CD4-positive, alpha-beta memory T cell (primary cell): ENCODE measurements at regions of chr7 and their contacts with region 1.

Region 1: DNA sequence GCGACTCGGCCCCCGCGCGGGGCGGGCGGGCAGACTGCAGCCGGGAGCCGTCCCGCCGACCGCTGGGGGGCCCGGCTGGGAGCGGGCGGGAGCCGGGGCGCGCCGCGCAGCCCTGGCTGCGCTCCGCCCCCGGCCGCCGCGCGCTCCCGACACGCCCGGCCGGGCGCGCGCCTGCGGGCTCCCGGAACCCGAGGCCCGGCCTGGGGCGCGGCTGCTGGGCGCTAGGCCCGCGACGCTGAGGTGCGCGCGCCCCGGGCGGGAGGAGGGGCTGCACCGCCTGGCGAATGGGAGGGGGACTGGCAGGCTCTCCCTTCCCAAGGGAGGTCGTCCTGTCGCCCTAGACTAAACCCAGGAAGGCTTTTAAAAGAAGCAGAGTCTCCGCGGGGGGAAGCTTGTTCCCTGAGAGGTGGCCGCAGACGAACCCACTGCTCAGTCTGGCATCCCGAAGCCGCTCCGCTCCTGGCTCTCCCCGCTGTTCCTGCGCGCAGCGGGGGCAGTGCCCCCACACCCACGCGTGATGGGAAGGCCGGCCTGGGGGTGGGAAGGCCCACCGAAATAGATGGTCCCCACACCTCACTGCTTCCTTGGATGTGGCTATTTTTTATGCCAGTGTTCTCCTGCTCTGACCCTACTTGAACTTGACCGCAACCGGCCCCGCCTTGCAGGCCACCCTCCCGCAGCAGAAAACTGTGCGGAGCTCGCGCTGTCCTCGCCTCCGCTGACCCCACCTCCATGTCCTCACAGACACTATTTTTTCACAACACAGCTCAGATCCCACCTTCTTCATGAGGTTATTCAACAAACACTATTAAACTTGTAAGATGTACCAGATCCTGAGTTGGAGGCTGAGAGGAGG is at the start of gene VOPP1:
- DNase-seq: peak in 4 of 5 donors; percentile 62 to 78 (median 69)
- H3K4me3 ChIP-seq: peak within 1 kb of the TSS; percentile 63 to 80
- H3K4me3 Mint-ChIP-seq: peak within 1 kb of the TSS; percentile 93 to 98 (median 96)
- H3K27ac ChIP-seq: peak within 1 kb of the TSS; percentile 82
- H3K27ac Mint-ChIP-seq: peak within 1 kb of the TSS; percentile 93 to 99 (median 97)
- H3K4me1 ChIP-seq: peaks cover 55% of the 10 kb centered on the region
- H3K4me1 Mint-ChIP-seq: peaks cover 44 to 72% (median 56%) of the 10 kb centered on the region in 4 donors
- H3K27me3 ChIP-seq: no peaks in the 10 kb centered on the region
- H3K27me3 Mint-ChIP-seq: no peaks in the 10 kb centered on the region
- total RNA-seq, gene VOPP1: 91.0 to 98.7 TPM

Region 2: GRCh38 chr7:54758702-54759592 is 813.7 kb before region 1 on chr7 and contains the start of gene SEC61G:
- CTCF ChIA-PET with region 1: no interaction called
- POLR2A ChIA-PET with region 1: interaction called, 10 read pairs
- intact Hi-C with region 1: loop called (anchors 10 kb)
- DNase-seq: peak; percentile 95 to 96 (median 95)
- H3K4me3 ChIP-seq: peak within 1 kb of the TSS; percentile 62 to 97
- H3K4me3 Mint-ChIP-seq: peak within 1 kb of the TSS; percentile 99 to 100 (median 100)
- H3K27ac ChIP-seq: peak within 1 kb of the TSS; percentile 81
- H3K27ac Mint-ChIP-seq: peak within 1 kb of the TSS; percentile 95 to 99 (median 98)
- H3K4me1 ChIP-seq: peaks cover 22% of the 10 kb centered on the region
- H3K4me1 Mint-ChIP-seq: peaks cover 15 to 51% (median 32%) of the 10 kb centered on the region in 4 donors
- H3K27me3 ChIP-seq: no peaks in the 10 kb centered on the region
- H3K27me3 Mint-ChIP-seq: no peaks in the 10 kb centered on the region
- total RNA-seq, gene SEC61G: 67.0 to 73.9 TPM

Region 3: DNA sequence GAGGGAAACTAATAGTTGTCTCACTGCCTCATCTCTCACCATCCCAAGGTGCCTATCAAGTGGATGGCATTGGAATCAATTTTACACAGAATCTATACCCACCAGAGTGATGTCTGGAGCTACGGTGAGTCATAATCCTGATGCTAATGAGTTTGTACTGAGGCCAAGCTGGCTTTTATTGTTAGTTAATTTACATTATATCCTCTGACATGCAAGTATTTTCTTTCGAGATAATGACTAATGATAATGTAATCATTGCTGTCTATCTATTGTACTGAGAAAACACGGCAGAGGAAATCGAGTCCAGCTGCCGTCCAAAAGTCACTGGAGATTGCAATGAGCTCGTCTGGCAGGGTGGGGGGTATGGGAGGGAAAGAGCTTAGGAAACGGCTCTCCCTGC is 379.9 kb before region 1 on chr7:
- CTCF ChIA-PET with region 1: no interaction called
- POLR2A ChIA-PET with region 1: no interaction called
- intact Hi-C with region 1: no loop called
- DNase-seq: no peak
- H3K4me3 ChIP-seq: no peak overlapping the region
- H3K4me3 Mint-ChIP-seq: no peak overlapping the region
- H3K27ac ChIP-seq: no peak overlapping the region
- H3K27ac Mint-ChIP-seq: no peak overlapping the region
- H3K4me1 ChIP-seq: no peaks in the 10 kb centered on the region
- H3K4me1 Mint-ChIP-seq: peaks cover 0 to 2% (median 0%) of the 10 kb centered on the region in 4 donors
- H3K27me3 ChIP-seq: no peaks in the 10 kb centered on the region
- H3K27me3 Mint-ChIP-seq: peaks cover 5 to 20% of the 10 kb centered on the region in 2 donors

Region 4: DNA sequence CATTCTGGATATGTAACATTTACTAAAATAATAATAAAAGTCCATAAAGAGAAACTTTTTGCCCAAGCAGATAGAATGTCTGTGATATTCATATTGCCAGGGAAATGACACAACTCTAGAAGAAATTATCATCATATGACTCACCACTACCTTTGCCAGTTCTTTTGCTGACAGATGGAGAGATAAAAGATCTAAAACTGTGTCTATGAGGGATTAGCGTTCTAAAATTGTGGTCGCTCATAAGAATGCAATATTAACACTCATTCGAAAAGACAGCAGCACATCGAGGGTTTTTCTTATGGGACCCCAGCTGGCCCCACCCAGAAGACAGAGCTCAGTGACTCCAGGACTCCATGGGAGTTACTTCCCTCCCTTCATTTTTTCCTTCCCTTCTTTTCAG is 224.1 kb before region 1 on chr7:
- CTCF ChIA-PET with region 1: no interaction called
- POLR2A ChIA-PET with region 1: no interaction called
- intact Hi-C with region 1: no loop called
- DNase-seq: no peak
- H3K4me3 ChIP-seq: no peak overlapping the region
- H3K4me3 Mint-ChIP-seq: no peak overlapping the region
- H3K27ac ChIP-seq: no peak overlapping the region
- H3K27ac Mint-ChIP-seq: peak overlapping the region in 1 of 7 donors; percentile 53
- H3K4me1 ChIP-seq: no peaks in the 10 kb centered on the region
- H3K4me1 Mint-ChIP-seq: peaks cover 0 to 4% (median 4%) of the 10 kb centered on the region in 4 donors
- H3K27me3 ChIP-seq: no peaks in the 10 kb centered on the region
- H3K27me3 Mint-ChIP-seq: peaks cover 3% of the 10 kb centered on the region in 2 donors

Region 5: DNA sequence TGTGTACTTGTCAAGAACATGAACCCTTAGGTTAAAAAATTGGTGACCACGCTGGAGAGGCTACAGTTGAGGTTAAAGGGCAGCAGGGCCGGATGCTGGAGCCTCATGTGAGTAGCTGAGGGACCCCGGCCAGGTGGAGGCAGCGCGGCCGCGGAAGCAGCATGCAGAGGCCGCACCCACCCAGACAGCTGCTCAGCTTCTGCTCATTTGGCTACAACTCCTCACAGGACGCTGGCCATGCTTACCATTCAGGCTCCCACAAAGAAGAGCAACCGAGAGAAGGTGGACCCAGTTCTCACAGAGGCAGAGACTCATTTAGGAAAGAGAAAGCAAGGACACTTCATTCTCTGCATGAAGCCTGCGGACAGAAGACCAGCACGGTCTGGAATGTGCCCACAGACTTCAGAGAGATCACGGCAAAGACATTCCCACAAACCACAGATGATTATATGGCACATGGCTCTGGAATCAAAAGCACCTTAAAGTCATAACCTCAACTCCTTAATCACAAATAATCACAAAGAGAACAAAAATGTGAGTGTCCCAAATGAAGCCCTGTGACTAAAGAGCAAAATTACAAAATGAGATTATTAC is 94.7 kb before region 1 on chr7:
- CTCF ChIA-PET with region 1: interaction called, 3 read pairs
- POLR2A ChIA-PET with region 1: interaction called, 8 read pairs
- intact Hi-C with region 1: loop called (anchors 2 kb)
- DNase-seq: no peak
- H3K4me3 ChIP-seq: no peak overlapping the region
- H3K4me3 Mint-ChIP-seq: peak overlapping the region in 6 of 8 donors; percentile 5 to 72 (median 46)
- H3K27ac ChIP-seq: peak overlapping the region; percentile 4
- H3K27ac Mint-ChIP-seq: peak overlapping the region; percentile 10 to 82 (median 68)
- H3K4me1 ChIP-seq: peaks cover 83% of the 10 kb centered on the region
- H3K4me1 Mint-ChIP-seq: peaks cover 68 to 96% (median 77%) of the 10 kb centered on the region in 4 donors
- H3K27me3 ChIP-seq: no peaks in the 10 kb centered on the region
- H3K27me3 Mint-ChIP-seq: no peaks in the 10 kb centered on the region

Region 6: GRCh38 chr7:55534175-55534915 is 38.3 kb before region 1 on chr7:
- CTCF ChIA-PET with region 1: interaction called, 13 read pairs
- POLR2A ChIA-PET with region 1: interaction called, 95 read pairs
- intact Hi-C with region 1: loop called (anchors 1 kb)
- DNase-seq: peak in 3 of 5 donors; percentile 27 to 84 (median 33)
- H3K4me3 ChIP-seq: peak overlapping the region in 1 of 2 donors; percentile 22
- H3K4me3 Mint-ChIP-seq: peak overlapping the region; percentile 71 to 88 (median 76)
- H3K27ac ChIP-seq: peak overlapping the region; percentile 60
- H3K27ac Mint-ChIP-seq: peak overlapping the region; percentile 92 to 97 (median 95)
- H3K4me1 ChIP-seq: peaks cover 96% of the 10 kb centered on the region
- H3K4me1 Mint-ChIP-seq: peaks cover 82 to 97% (median 91%) of the 10 kb centered on the region in 4 donors
- H3K27me3 ChIP-seq: no peaks in the 10 kb centered on the region
- H3K27me3 Mint-ChIP-seq: no peaks in the 10 kb centered on the region

Region 7: DNA sequence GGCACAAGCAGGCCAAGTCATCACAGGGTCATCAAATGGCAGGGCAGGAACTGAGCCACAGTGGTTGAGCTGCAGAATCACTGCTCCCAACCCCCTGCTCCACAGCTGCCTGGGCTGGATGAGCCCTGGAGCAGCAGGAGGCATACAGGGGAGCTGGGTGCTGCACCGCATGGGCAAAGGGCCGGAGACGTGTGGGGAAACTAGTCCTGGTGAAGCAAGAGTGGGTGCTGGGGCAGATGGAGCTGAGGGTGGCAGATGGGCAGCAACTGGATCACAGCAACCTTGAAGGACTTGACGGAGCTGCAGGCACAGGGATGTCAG is 15.7 kb after region 1 on chr7:
- CTCF ChIA-PET with region 1: interaction called, 22 read pairs
- POLR2A ChIA-PET with region 1: interaction called, 28 read pairs
- intact Hi-C with region 1: loop called (anchors 2 kb)
- DNase-seq: no peak
- H3K4me3 ChIP-seq: no peak overlapping the region
- H3K4me3 Mint-ChIP-seq: no peak overlapping the region
- H3K27ac ChIP-seq: no peak overlapping the region
- H3K27ac Mint-ChIP-seq: peak overlapping the region in 2 of 7 donors; percentile 38 to 68
- H3K4me1 ChIP-seq: peaks cover 3% of the 10 kb centered on the region
- H3K4me1 Mint-ChIP-seq: peaks cover 4 to 18% (median 9%) of the 10 kb centered on the region in 4 donors
- H3K27me3 ChIP-seq: no peaks in the 10 kb centered on the region
- H3K27me3 Mint-ChIP-seq: peaks cover 2 to 3% of the 10 kb centered on the region in 2 donors

Region 8: GRCh38 chr7:55827577-55827976 is 255.0 kb after region 1 on chr7:
- CTCF ChIA-PET with region 1: no interaction called
- POLR2A ChIA-PET with region 1: no interaction called
- intact Hi-C with region 1: no loop called
- DNase-seq: no peak
- H3K4me3 ChIP-seq: no peak overlapping the region
- H3K4me3 Mint-ChIP-seq: no peak overlapping the region
- H3K27ac ChIP-seq: no peak overlapping the region
- H3K27ac Mint-ChIP-seq: no peak overlapping the region
- H3K4me1 ChIP-seq: no peaks in the 10 kb centered on the region
- H3K4me1 Mint-ChIP-seq: no peaks in the 10 kb centered on the region
- H3K27me3 ChIP-seq: no peaks in the 10 kb centered on the region
- H3K27me3 Mint-ChIP-seq: peaks cover 0 to 3% of the 10 kb centered on the region in 2 donors

Region 9: GRCh38 chr7:55951637-55952351 is 379.2 kb after region 1 on chr7 and contains the start of gene MRPS17:
- CTCF ChIA-PET with region 1: no interaction called
- POLR2A ChIA-PET with region 1: no interaction called
- intact Hi-C with region 1: loop called (anchors 5 kb)
- DNase-seq: peak; percentile 92 to 95 (median 93)
- H3K4me3 ChIP-seq: peak within 1 kb of the TSS; percentile 88 to 96
- H3K4me3 Mint-ChIP-seq: peak within 1 kb of the TSS; percentile 92 to 97 (median 94)
- H3K27ac ChIP-seq: peak within 1 kb of the TSS; percentile 71
- H3K27ac Mint-ChIP-seq: peak within 1 kb of the TSS; percentile 87 to 99 (median 98)
- H3K4me1 ChIP-seq: peaks cover 12% of the 10 kb centered on the region
- H3K4me1 Mint-ChIP-seq: peaks cover 12 to 32% (median 18%) of the 10 kb centered on the region in 4 donors
- H3K27me3 ChIP-seq: no peaks in the 10 kb centered on the region
- H3K27me3 Mint-ChIP-seq: no peaks in the 10 kb centered on the region
- total RNA-seq, gene MRPS17: 11.5 to 13.2 TPM